Common myeloid progenitor, CD34-positive (primary cell): ENCODE measurements at regions of chr14 and their contacts with region 1.

Region 1: GRCh38 chr14:89973234-89973823 is 17.6 kb downstream of the TDP1 start:
- DNase-seq: peak; percentile 58 to 74 (median 67)
- H3K4me3 ChIP-seq: no peak overlapping the region
- H3K27ac ChIP-seq: no peak overlapping the region
- H3K4me1 ChIP-seq: no peaks in the 10 kb centered on the region
- H3K27me3 ChIP-seq: no peaks in the 10 kb centered on the region

Region 2: GRCh38 chr14:89881839-89882238 is 91.5 kb before region 1 on chr14:
- CTCF ChIA-PET with region 1: no interaction called
- POLR2A ChIA-PET with region 1: no interaction called
- DNase-seq: no peak
- H3K4me3 ChIP-seq: no peak overlapping the region
- H3K27ac ChIP-seq: no peak overlapping the region
- H3K4me1 ChIP-seq: peaks cover 0 to 3% (median 0%) of the 10 kb centered on the region in 4 experiments
- H3K27me3 ChIP-seq: no peaks in the 10 kb centered on the region

Region 3: DNA sequence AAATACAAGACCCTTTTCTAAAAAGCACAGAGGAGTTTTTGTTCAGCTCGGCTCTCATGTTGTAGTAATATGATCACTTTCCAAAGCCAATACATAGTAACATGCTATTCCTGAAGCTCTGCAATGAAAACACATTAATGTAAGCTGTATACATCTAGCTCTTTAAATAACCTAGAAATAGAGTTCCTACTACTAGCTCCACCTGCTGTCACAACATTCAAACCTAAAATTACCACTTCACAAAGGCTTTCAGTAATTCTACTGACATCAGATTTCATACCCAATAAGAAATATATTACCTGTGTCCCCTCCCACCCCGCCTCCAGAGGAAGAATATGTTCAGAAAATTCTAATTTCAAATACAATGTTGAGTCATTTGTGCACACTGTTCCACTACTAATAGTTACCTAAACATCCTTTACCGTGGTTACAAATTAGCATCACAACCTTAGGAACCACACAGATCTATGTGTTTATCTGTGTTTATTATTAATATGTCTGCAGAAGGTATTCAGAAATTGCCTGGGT is 36.6 kb before region 1 on chr14:
- CTCF ChIA-PET with region 1: interaction called, 10 read pairs
- POLR2A ChIA-PET with region 1: no interaction called
- DNase-seq: no peak
- H3K4me3 ChIP-seq: no peak overlapping the region
- H3K27ac ChIP-seq: no peak overlapping the region
- H3K4me1 ChIP-seq: no peaks in the 10 kb centered on the region
- H3K27me3 ChIP-seq: no peaks in the 10 kb centered on the region

Region 4: GRCh38 chr14:89954070-89955028 is 19.0 kb before region 1 on chr14 and contains the start of gene EFCAB11:
- CTCF ChIA-PET with region 1: interaction called, 24 read pairs
- POLR2A ChIA-PET with region 1: no interaction called
- DNase-seq: peak; percentile 98 to 99 (median 99)
- H3K4me3 ChIP-seq: peak within 1 kb of the TSS; percentile 74 to 96 (median 90)
- H3K27ac ChIP-seq: peak within 1 kb of the TSS; percentile 50 to 93
- H3K4me1 ChIP-seq: peaks cover 7 to 32% (median 27%) of the 10 kb centered on the region in 4 experiments
- H3K27me3 ChIP-seq: no peaks in the 10 kb centered on the region

Region 5: GRCh38 chr14:89990218-89990617 is 16.9 kb after region 1 on chr14:
- CTCF ChIA-PET with region 1: interaction called, 13 read pairs
- POLR2A ChIA-PET with region 1: no interaction called
- DNase-seq: no peak
- H3K4me3 ChIP-seq: no peak overlapping the region
- H3K27ac ChIP-seq: no peak overlapping the region
- H3K4me1 ChIP-seq: no peaks in the 10 kb centered on the region
- H3K27me3 ChIP-seq: no peaks in the 10 kb centered on the region

Region 6: DNA sequence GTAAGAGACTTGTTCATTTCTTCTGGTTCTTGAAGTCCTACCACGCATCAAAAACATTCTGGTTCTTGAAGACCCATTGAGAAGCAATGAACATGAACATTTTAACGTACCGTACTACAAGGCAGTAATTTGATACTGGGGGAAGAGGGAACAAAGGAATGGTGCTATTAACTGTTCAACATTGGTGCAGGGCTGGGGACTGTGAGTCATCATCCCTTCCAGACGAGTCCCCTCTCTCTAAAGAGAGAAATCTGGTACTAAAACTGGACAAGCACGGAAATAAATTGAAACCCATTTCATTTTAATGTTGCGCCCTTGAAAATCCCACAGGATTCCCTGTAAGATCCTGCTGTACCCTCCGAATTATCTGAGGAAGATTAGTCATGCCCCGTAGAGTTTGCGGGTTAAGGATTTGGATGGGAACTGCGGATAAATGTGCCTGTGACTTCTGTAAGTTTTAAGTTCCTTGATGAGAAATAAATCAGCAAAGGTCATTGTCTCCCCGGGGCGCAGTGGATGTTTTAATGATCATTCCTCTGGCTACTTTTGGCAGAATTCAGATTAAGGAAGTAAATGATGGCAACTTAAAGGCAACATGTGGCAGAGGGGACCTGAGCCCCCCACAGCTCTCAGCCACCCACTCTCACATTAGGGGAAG is 167.1 kb after region 1 on chr14:
- CTCF ChIA-PET with region 1: no interaction called
- POLR2A ChIA-PET with region 1: no interaction called
- DNase-seq: no peak
- H3K4me3 ChIP-seq: no peak overlapping the region
- H3K27ac ChIP-seq: no peak overlapping the region
- H3K4me1 ChIP-seq: no peaks in the 10 kb centered on the region
- H3K27me3 ChIP-seq: peaks cover 0 to 7% (median 2%) of the 10 kb centered on the region in 5 experiments

Region 7: DNA sequence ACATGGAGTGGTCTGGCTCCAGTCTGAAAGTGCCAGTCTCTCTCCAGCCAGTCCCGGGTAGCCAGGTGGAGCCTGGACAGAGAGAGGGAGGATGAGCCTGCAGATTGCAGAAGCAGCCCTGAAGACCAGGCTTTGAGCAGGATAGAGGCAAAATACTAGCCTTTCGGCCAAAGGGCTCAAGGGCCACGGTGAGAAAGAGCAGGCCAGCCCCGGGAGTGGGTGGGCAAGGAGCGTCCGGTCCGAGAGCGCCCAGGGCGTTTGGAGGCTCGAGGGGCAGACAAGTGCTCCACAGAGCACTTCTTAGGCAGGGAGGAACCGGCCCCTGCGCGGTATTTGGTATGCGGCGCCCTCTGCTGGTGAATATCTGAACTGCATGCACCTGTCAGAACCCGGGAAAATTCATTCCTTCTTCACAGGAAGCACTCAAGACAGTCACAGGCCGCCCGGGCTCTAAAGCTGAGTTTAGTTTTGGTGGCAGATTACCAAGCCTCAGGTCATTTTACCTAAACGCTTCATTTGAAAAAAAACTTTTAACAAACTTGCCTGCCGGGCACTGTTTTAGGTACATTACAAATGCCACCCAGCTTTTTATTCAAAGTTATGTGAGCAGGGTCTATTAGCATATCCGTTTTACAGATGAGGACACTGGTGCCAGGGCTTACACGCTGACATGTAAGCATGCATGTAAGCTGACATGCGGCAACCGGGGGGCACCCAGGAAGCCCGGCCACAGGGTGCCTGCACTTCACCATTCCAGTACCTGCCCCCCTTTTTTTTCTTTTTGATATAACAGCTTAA is 262.0 kb after region 1 on chr14:
- CTCF ChIA-PET with region 1: interaction called, 38 read pairs
- POLR2A ChIA-PET with region 1: no interaction called
- DNase-seq: peak; percentile 67 to 70 (median 69)
- H3K4me3 ChIP-seq: no peak overlapping the region
- H3K27ac ChIP-seq: no peak overlapping the region
- H3K4me1 ChIP-seq: peaks cover 0 to 5% (median 0%) of the 10 kb centered on the region in 4 experiments
- H3K27me3 ChIP-seq: peaks cover 0 to 6% (median 0%) of the 10 kb centered on the region in 5 experiments